ENCODE measurements at regions of chr20 and their contacts with region 1.

Region 1: DNA sequence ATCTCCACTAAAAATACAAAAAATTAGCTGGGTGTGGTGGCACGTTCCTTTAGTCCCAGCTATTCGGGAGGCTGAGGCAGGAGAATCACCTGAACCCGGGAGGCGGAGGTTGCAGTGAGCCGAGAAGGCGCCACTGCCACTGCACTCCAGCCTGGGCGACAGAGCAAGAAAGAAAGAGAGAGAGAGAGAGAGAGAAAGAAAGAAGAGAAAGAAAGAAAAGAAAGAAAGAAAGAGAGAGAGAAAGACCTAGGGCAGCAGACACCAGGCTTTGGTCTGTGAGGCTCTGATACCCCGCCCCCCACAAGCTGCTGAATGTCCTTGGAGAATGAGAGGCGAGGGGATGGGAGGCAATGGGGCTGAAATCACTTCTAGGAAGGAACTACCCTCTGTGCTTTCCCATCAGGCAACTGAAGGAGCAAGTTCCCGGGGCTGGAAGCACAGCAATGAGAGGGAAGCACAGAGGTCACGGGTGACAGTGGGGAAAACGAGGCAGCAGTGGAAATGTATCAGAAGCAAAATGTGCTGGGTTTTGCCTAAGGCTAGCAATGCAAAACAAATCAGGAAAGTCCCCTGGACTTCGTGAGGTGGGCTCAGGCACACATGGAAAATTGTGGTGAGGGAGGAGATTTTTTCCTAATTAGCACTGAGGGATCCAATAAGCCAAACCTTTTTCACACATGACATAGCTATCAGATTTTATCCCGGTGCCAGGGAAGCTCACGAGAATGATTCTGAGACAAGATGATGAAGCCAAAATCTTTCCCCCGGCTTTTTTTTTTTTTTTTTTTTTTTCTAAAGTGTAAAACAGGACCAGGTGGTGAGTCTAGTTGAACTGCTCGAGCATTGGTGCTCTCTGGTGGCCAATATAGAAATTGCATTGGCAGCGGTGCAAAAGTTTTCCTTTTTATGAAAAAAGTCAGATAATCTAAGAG is 16.9 kb upstream of the ARFGEF2 start:
- DNase-seq: peak in 1 of 4 donors; percentile 66
- ATAC-seq: peak; percentile 83
- H3K4me3 ChIP-seq: no peak overlapping the region
- H3K27ac ChIP-seq: no peak overlapping the region
- H3K4me1 ChIP-seq: peaks cover 0 to 38% of the 10 kb centered on the region in 2 donors
- H3K27me3 ChIP-seq: peaks cover 0 to 17% of the 10 kb centered on the region in 2 donors
- CTCF ChIP-seq: peak; percentile 76 to 82

Region 2: DNA sequence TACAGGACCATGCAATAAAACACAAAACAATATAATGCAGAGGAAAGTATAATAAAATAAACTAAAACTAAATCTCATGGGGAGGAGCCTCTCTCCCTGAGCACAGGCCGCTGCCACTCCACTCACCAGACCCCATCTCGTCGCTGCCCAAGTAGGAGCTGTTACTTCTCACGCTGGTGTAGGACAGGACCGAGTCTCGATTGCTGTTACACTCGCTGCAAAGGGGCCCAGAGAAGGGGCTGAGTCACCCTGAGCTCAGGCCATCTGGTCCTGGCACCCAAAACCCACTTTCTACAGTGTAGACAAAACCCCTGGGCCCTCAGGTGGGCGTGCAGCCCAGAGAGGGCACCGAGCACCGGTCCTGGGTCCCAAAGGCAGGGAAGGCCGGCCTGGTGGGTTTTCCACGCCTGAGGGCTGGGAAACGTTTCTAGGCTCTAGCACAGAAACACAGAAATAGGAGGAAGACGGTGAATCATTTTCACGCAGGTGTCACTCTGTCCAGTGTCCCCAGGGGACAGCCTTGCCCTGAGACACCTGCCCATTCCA is 260.3 kb before region 1 on chr20:
- intact Hi-C with region 1: no loop called
- DNase-seq: peak in 1 of 4 donors; percentile 33
- ATAC-seq: no peak
- H3K4me3 ChIP-seq: no peak overlapping the region
- H3K27ac ChIP-seq: no peak overlapping the region
- H3K4me1 ChIP-seq: no peaks in the 10 kb centered on the region
- H3K27me3 ChIP-seq: no peaks in the 10 kb centered on the region
- CTCF ChIP-seq: no peak

Region 3: DNA sequence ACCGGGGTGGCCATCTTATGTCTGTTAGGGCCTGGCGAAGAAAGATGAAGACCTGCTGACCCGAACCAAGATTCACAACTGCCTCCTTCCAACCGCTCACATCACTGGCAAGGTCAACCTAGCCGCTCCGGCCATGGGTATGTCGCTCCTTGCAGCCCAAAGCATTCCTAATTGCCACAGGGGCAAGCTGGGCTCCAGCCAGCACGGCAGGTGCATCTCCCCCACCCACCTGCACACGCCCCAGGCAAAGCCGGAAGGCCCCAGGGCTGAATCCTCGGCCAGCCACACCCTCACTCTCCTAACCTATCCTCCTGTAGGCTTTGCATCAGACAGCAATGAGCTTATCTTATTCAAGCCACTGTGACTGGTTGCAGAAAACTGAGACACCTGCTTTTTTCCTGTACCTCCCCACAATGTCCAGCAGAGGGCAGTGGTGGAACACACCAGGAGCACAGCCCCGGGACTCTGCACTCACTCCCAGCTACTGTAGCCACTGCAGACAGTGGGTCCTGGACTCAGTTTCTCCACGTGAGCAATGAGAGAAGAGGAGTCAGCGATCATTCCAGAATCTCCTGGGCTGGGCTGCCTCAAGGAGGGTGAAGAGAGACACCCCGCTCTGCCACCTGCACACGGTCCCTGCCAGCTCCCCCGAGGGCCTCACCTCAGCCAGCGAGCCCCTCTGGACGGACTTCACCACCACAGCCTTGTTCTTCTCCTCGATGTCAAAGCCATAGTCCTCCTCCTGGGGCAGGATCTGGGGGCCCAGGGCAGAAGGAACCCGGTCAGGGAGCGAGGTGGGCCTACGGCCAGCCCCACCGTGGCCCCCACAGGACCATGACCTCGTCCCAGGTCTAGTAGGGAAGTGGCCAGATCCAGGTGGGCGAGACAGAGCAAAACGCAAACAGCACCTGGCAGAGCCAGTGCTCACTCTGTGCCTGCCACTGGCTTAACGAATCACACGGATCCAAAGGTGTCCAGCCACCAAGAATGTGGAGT is 246.9 kb before region 1 on chr20:
- intact Hi-C with region 1: loop called (anchors 5 kb)
- DNase-seq: peak in 3 of 4 donors; percentile 64 to 86 (median 73)
- ATAC-seq: peak; percentile 97
- H3K4me3 ChIP-seq: no peak overlapping the region
- H3K27ac ChIP-seq: no peak overlapping the region
- H3K4me1 ChIP-seq: peaks cover 0 to 14% of the 10 kb centered on the region in 2 donors
- H3K27me3 ChIP-seq: peaks cover 0 to 6% of the 10 kb centered on the region in 2 donors
- CTCF ChIP-seq: peak; percentile 90 to 93

Region 4: GRCh38 chr20:48776306-48776705 is 128.3 kb before region 1 on chr20:
- intact Hi-C with region 1: no loop called
- DNase-seq: peak in 1 of 4 donors; percentile 80
- ATAC-seq: no peak
- H3K4me3 ChIP-seq: no peak overlapping the region
- H3K27ac ChIP-seq: peak overlapping the region; percentile 33 to 87
- H3K4me1 ChIP-seq: peaks cover 6 to 99% of the 10 kb centered on the region in 2 donors
- H3K27me3 ChIP-seq: peaks cover 0 to 11% of the 10 kb centered on the region in 2 donors
- CTCF ChIP-seq: no peak

Region 5: DNA sequence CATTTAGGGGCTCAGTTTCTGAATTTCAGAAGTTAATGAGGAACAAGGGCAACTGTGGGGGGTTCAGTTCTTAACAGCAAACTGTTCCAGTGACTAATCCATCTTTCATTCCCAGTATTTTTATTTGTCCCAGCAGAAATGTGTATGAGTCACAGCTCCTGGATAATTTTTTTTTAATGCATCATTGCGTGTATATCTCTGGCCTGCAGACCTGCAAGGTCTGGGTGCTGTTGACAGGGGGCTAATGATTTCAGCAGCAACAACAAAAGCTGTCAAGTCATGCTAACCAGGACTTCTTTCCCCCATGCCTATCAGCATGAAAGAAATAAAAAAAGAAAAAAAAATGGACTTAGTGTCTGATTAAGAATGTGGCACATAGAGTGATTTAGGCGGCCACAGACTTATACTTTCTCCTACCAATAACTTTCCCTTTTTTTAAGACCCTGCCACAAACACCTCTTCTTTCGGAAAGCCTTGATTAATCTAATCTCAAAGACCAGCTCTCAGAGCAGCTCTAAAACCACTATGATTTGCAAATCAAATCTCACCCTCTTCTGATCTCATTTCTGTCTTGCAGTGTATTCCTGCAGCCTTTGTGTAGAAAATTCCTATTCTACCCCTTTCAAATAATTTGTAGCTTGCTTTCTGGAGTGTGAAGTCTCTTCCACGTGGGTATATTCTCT is 62.6 kb before region 1 on chr20:
- intact Hi-C with region 1: no loop called
- DNase-seq: no peak
- ATAC-seq: no peak
- H3K4me3 ChIP-seq: no peak overlapping the region
- H3K27ac ChIP-seq: no peak overlapping the region
- H3K4me1 ChIP-seq: peaks cover 0 to 13% of the 10 kb centered on the region in 2 donors
- H3K27me3 ChIP-seq: peaks cover 0 to 18% of the 10 kb centered on the region in 2 donors
- CTCF ChIP-seq: no peak

Measured in left lung (tissue), 14 donors.